ENCODE measurements at regions of chr16 and their contacts with region 1.

Region 1: DNA sequence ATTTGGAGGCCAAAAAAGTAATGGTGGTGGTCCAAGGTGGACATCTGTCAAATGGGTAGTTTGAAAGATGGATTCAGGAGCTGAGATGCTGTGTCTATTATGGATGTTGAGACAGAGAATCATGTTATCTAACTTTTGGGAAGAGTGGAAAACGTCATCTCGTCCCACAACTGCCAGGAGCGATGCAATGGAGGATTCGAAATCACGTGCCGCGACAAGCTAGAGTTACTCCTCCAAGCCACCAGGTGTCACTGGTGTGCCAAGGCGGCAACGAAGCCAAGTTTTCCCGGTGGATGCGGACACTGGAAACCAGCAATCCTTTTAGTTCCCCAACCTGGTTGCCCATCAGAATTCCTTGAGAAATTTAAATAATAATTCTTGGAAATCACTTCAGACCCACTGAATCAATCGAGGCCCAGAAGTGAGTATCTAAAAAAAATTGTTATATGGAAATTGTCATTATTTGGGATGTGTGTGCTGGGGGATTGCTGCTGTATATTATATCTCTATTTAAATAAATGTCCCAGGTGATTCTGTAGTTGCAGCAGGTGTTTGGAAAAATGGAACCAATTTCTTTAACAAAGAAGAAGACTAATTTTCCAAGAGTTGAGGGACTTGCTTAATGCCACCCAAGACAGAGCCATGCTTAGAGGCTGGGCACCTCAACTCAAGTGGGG is 206.1 kb downstream of the HAPSTR1 start:
- DNase-seq: peak; percentile 76
- H3K4me3 ChIP-seq: no peak overlapping the region
- H3K27ac ChIP-seq: no peak overlapping the region
- H3K4me1 ChIP-seq: no peaks in the 10 kb centered on the region
- H3K27me3 ChIP-seq: no peaks in the 10 kb centered on the region
- CTCF ChIP-seq: peak; percentile 83

Region 2: GRCh38 chr16:9225611-9226316 is 71.8 kb before region 1 on chr16:
- CTCF ChIA-PET with region 1: no interaction called
- POLR2A ChIA-PET with region 1: no interaction called
- intact Hi-C with region 1: no loop called
- DNase-seq: peak; percentile 63
- H3K4me3 ChIP-seq: no peak overlapping the region
- H3K27ac ChIP-seq: no peak overlapping the region
- H3K4me1 ChIP-seq: no peaks in the 10 kb centered on the region
- H3K27me3 ChIP-seq: no peaks in the 10 kb centered on the region
- CTCF ChIP-seq: peak; percentile 69

Region 3: GRCh38 chr16:9434659-9435058 is 137.1 kb after region 1 on chr16:
- CTCF ChIA-PET with region 1: no interaction called
- POLR2A ChIA-PET with region 1: no interaction called
- intact Hi-C with region 1: loop called (anchors 5 kb)
- DNase-seq: no peak
- H3K4me3 ChIP-seq: no peak overlapping the region
- H3K27ac ChIP-seq: no peak overlapping the region
- H3K4me1 ChIP-seq: no peaks in the 10 kb centered on the region
- H3K27me3 ChIP-seq: no peaks in the 10 kb centered on the region
- CTCF ChIP-seq: no peak

Region 4: DNA sequence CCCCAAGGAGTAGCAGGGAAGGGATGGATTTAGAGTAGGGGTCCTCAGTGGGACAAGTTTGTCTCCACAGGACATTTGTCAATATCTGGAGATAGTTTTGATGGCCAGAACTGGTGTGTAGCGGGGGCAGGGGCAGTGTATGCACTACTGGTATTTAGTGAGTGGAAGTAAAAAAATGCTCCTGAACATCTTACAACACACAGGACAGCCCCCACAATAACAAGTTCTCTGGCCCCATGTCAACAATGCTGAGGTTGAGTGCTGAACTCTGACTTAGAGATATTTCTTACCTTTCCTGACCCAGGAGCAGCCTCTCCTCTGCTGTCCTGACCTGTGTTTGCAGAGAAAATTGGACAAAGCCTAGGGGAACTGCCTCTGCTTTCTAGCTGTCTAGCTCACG is 159.6 kb after region 1 on chr16:
- CTCF ChIA-PET with region 1: no interaction called
- POLR2A ChIA-PET with region 1: no interaction called
- intact Hi-C with region 1: no loop called
- DNase-seq: no peak
- H3K4me3 ChIP-seq: no peak overlapping the region
- H3K27ac ChIP-seq: no peak overlapping the region
- H3K4me1 ChIP-seq: no peaks in the 10 kb centered on the region
- H3K27me3 ChIP-seq: no peaks in the 10 kb centered on the region
- CTCF ChIP-seq: no peak